A549 (cell line): ENCODE measurements at regions of chrX and their contacts with region 1.

Region 1: GRCh38 chrX:133776072-133776471 is 209.3 kb downstream of the GPC3 start:
- DNase-seq: peak in 1 of 2 experiments; percentile 1
- ATAC-seq: peak in 1 of 2 experiments; percentile 46; a peak in 1 of 6 replicates
- H3K4me3 ChIP-seq: no peak overlapping the region
- H3K27ac ChIP-seq: no peak overlapping the region
- H3K4me1 ChIP-seq: no peaks in the 10 kb centered on the region
- CTCF ChIP-seq: peak; percentile 48
- EP300 ChIP-seq: no peak
- POLR2A ChIP-seq: no peak
- RAD21 ChIP-seq: 0 out of 5 replicates have a peak, but pooled peaks of 1 of the 2 experiments have one; percentile 18

Region 2: DNA sequence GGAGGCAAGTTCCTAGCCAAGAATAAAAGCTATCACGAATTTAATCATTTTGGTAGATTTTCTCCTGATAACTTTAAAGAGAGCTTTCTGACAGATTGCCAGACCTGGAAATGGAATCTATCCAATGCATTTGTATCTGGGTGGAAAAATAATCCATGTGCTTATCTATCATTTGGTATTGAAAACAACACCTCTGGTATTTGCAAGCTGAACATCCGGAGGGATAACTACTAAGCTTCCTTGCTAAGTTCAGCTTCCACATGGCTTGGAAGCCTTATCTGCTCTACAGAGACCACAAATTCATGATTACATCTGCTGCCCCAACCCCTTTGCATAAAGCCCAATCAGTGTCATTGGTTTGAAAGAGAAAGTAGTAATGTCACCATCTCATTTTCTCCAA is 21.4 kb before region 1 on chrX:
- CTCF ChIA-PET with region 1: no interaction called
- POLR2A ChIA-PET with region 1: no interaction called
- DNase-seq: no peak
- ATAC-seq: no peak
- H3K4me3 ChIP-seq: no peak overlapping the region
- H3K27ac ChIP-seq: no peak overlapping the region
- H3K4me1 ChIP-seq: no peaks in the 10 kb centered on the region
- CTCF ChIP-seq: no peak
- EP300 ChIP-seq: no peak
- POLR2A ChIP-seq: no peak
- RAD21 ChIP-seq: no peak

Region 3: DNA sequence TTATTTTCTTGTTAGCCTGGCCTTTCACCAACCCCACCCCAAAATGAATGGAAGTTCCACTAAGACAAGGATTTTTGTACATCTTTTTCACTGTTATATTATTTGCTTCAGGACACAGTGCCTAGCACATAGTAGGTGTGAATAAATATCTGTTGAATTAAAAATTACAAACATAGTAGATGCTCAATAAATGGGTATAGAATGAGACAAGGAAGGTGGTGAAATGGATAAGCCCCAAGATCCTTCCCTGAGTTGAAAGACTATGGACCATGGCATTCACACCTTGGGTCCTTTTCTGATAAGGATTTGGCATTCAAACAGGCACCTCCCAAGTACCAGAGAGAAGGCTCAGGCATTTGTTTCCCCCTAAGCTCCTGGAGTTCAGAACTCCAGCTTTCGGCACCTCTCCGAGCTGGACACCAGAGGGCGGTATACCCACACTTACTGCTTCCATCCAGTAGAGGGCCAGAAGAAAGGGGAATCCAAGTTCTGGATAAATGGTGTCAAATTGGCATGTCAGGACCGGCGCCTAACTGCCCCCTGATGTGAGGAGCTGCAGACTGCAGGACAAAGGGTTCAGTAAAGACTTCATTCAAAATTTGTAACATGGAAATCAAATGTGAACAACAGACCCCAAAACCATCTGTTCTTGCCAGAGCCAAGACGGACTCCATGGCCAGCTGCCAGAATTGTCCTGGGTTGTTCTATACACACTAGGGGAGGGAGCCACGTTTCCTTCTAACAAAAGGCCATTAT is 16.3 kb after region 1 on chrX:
- CTCF ChIA-PET with region 1: interaction called, 16 read pairs
- POLR2A ChIA-PET with region 1: no interaction called
- DNase-seq: peak; percentile 39 to 68
- ATAC-seq: peak; percentile 97
- H3K4me3 ChIP-seq: no peak overlapping the region
- H3K27ac ChIP-seq: no peak overlapping the region
- H3K4me1 ChIP-seq: no peaks in the 10 kb centered on the region
- CTCF ChIP-seq: peak; percentile 89
- EP300 ChIP-seq: no peak
- POLR2A ChIP-seq: no peak
- RAD21 ChIP-seq: peak; percentile 68 to 75